ENCODE measurements at regions of chr22 and their contacts with region 1.

Region 1: GRCh38 chr22:42437488-42438292 is 5.5 kb upstream of the NFAM1 start:
- DNase-seq: peak; percentile 95
- H3K4me3 ChIP-seq: peak overlapping the region; percentile 30 to 71 (median 44)
- H3K27ac ChIP-seq: peak overlapping the region in 7 of 8 donors; percentile 69 to 97 (median 75)
- H3K4me1 ChIP-seq: peaks cover 14 to 90% (median 59%) of the 10 kb centered on the region in 6 donors
- H3K27me3 ChIP-seq: peaks cover 0 to 57% (median 0%) of the 10 kb centered on the region in 7 donors
- CTCF ChIP-seq: peak; percentile 85 to 99 (median 97)
- POLR2A ChIP-seq: no peak

Region 2: GRCh38 chr22:42090596-42091454 is 346.9 kb before region 1 on chr22 and contains the start of gene NDUFA6:
- intact Hi-C with region 1: loop called (anchors 5 kb)
- DNase-seq: peak; percentile 100
- H3K4me3 ChIP-seq: peak within 1 kb of the TSS; percentile 68 to 94 (median 84)
- H3K27ac ChIP-seq: peak within 1 kb of the TSS; percentile 93 to 98 (median 95)
- H3K4me1 ChIP-seq: peaks cover 12 to 55% (median 44%) of the 10 kb centered on the region in 6 donors
- H3K27me3 ChIP-seq: no peaks in the 10 kb centered on the region
- CTCF ChIP-seq: peak; percentile 87 to 99 (median 97)
- POLR2A ChIP-seq: peak; percentile 43 to 72 (median 66)
- total RNA-seq, gene NDUFA6: 31.1 to 44.9 (median 36.8) TPM

Region 3: GRCh38 chr22:42169055-42169469 is 268.6 kb before region 1 on chr22:
- intact Hi-C with region 1: loop called (anchors 2 kb)
- DNase-seq: peak; percentile 88
- H3K4me3 ChIP-seq: no peak overlapping the region
- H3K27ac ChIP-seq: no peak overlapping the region
- H3K4me1 ChIP-seq: peaks cover 8 to 44% (median 23%) of the 10 kb centered on the region in 6 donors
- H3K27me3 ChIP-seq: no peaks in the 10 kb centered on the region
- CTCF ChIP-seq: peak; percentile 68 to 92 (median 79)
- POLR2A ChIP-seq: no peak

Measured in spleen (tissue), 13 donors.